ENCODE measurements at regions of chr12 and their contacts with region 1.

Region 1: DNA sequence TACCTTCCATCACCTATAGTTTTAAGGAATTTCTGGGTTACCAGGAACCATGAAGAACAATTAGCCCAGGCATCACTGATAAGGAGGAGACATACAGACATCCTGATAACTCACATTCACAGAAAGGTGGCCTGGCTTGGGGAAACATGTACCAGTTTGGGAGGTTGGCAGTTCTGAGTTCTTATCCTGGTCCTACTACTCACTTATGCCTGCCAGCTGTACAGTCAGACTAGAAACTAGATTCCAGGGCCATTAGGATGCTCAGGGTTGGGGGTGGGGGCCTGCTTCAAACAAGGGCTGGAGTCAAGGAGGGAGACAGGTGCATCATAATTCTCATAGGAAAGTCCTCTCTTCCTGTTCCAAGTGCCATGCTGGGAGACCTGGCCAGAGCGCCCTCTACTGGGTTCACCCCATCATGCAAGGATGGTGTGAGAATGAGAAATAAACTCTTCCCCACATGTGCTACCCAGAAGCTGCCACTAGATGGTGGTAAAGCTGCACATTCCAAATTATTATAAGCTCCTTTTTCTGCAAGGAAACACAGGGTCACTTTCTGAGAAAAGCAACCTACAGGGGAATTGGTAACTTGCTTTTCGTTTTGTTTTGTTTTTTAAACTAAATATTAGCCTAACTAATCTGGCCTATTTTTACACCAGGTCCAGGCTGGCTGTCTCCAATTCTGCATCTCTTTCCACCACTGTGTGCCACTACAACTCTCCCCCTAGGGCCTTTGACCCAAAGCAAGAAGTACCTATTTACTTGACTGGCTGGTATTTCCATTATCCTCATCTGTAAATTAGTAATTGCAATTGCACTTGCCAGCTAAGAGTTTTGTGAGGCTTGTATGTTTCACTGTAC is 14.5 kb downstream of the OAS2 start:
- DNase-seq: peak; percentile 75
- ATAC-seq: peak; percentile 81
- H3K4me3 Mint-ChIP-seq: no peak overlapping the region
- H3K27ac Mint-ChIP-seq: peak overlapping the region; percentile 1
- H3K4me1 Mint-ChIP-seq: peaks cover 17% of the 10 kb centered on the region
- H3K27me3 Mint-ChIP-seq: no peaks in the 10 kb centered on the region
- CTCF ChIP-seq: peak; percentile 95

Region 2: GRCh38 chr12:112900299-112901145 is 92.2 kb before region 1 on chr12:
- CTCF ChIA-PET with region 1: interaction called, 12 read pairs
- POLR2A ChIA-PET with region 1: no interaction called
- intact Hi-C with region 1: no loop called
- DNase-seq: peak; percentile 60
- ATAC-seq: peak; percentile 67
- H3K4me3 Mint-ChIP-seq: no peak overlapping the region
- H3K27ac Mint-ChIP-seq: no peak overlapping the region
- H3K4me1 Mint-ChIP-seq: peaks cover 15% of the 10 kb centered on the region
- H3K27me3 Mint-ChIP-seq: no peaks in the 10 kb centered on the region
- CTCF ChIP-seq: peak; percentile 86

Region 3: DNA sequence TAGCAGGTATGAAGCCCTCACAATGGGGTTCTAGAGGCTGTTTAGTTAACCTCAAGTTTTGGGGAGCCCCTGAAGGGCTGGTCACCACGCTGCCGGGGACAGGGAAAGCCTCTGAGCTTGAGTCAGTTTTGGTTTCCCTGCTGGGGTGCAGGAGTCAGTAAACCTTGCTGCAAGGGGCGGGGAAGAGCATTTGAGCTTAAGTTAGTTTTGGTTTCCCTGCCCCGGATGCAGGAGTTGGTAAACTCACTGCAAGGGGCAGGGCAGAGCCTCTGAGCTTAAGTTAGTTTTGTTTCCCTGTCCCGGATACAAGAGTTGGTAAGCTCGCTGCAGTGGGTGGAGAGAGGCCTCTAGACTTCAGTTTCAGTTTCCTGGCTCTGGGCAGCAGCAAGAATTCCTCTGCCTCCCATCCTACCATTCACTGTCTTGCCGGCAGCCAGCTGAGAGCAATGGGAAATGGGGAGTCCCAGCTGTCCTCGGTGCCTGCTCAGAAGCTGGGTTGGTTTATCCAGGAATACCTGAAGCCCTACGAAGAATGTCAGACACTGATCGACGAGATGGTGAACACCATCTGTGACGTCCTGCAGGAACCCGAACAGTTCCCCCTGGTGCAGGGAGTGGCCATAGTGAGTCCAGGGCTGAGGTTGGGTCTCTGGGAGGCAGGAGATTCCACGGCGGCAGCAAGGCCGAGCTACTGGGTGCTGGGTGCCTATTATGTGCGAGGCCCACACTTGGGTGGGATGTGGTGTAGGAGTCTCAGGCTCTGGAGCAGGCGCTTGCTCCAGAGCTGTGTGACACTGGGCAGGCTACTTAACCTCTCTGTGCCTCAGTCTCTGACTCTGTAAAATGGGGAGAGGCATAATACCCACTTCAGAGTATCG is 14.4 kb before region 1 on chr12 and contains the start of gene OAS2:
- CTCF ChIA-PET with region 1: interaction called, 54 read pairs
- POLR2A ChIA-PET with region 1: interaction called, 74 read pairs
- intact Hi-C with region 1: no loop called
- DNase-seq: peak; percentile 91
- ATAC-seq: peak; percentile 91
- H3K4me3 Mint-ChIP-seq: peak within 1 kb of the TSS; percentile 99
- H3K27ac Mint-ChIP-seq: peak within 1 kb of the TSS; percentile 99
- H3K4me1 Mint-ChIP-seq: peaks cover 35% of the 10 kb centered on the region
- H3K27me3 Mint-ChIP-seq: no peaks in the 10 kb centered on the region
- CTCF ChIP-seq: no peak
- total RNA-seq, gene OAS2: 95.7 to 104 TPM

Region 4: GRCh38 chr12:113030875-113031525 is 38.2 kb after region 1 on chr12:
- CTCF ChIA-PET with region 1: interaction called, 13 read pairs
- POLR2A ChIA-PET with region 1: interaction called, 6 read pairs
- intact Hi-C with region 1: no loop called
- DNase-seq: peak; percentile 4
- ATAC-seq: peak; percentile 39
- H3K4me3 Mint-ChIP-seq: no peak overlapping the region
- H3K27ac Mint-ChIP-seq: no peak overlapping the region
- H3K4me1 Mint-ChIP-seq: peaks cover 2% of the 10 kb centered on the region
- H3K27me3 Mint-ChIP-seq: peaks cover 4% of the 10 kb centered on the region
- CTCF ChIP-seq: peak; percentile 62

Region 5: GRCh38 chr12:113152835-113153814 is 160.4 kb after region 1 on chr12:
- CTCF ChIA-PET with region 1: interaction called, 15 read pairs
- POLR2A ChIA-PET with region 1: no interaction called
- intact Hi-C with region 1: no loop called
- DNase-seq: peak; percentile 83
- ATAC-seq: peak; percentile 83
- H3K4me3 Mint-ChIP-seq: peak overlapping the region; percentile 72
- H3K27ac Mint-ChIP-seq: peak overlapping the region; percentile 73
- H3K4me1 Mint-ChIP-seq: peaks cover 28% of the 10 kb centered on the region
- H3K27me3 Mint-ChIP-seq: peaks cover 21% of the 10 kb centered on the region
- CTCF ChIP-seq: peak; percentile 51

Region 6: DNA sequence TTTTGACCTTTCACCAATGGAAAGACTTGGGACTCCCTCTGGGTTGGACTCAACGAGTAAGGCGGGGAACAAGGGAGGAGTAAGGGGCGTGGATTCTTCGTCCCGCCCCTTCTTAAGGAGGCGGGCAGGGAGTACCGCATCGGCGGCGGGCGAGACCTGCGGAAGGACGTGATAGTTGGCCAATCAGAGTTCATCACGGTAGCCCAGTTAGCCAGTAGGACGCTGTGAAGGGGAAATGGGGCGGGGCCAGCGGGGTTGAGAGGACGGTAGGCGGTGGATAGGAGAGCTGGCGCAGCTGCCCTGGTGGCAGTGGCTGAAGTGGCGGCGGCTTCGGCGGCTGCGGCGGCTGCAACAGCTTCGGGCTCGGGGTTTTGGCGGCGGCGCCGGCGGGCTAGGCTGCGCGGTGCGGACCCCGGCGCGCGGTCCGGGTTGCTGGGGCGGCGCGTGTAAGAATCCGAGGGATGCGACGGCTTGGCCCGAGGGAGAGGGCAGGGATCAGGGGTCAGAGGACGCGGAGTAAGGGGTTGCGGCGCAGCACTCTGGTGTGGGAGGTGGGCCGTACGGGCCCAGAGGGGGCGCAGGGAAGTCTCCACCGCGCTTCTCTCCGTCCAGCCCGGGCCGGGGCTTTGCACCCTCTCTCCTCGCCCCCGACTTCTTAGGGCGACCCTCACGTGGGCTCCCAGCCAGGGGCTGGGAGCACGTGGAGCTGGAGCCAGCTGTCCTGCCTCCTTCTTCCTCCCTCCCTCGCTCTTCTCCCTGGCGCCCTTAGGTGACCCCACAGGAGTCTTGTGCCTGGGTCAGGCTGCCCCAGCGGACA is 228.6 kb after region 1 on chr12 and contains the start of gene TPCN1:
- CTCF ChIA-PET with region 1: no interaction called
- POLR2A ChIA-PET with region 1: no interaction called
- intact Hi-C with region 1: no loop called
- DNase-seq: peak; percentile 100
- ATAC-seq: peak; percentile 96
- H3K4me3 Mint-ChIP-seq: peak within 1 kb of the TSS; percentile 95
- H3K27ac Mint-ChIP-seq: peak within 1 kb of the TSS; percentile 88
- H3K4me1 Mint-ChIP-seq: peaks cover 35% of the 10 kb centered on the region
- H3K27me3 Mint-ChIP-seq: no peaks in the 10 kb centered on the region
- CTCF ChIP-seq: no peak
- total RNA-seq, gene TPCN1: 29.9 to 33.5 TPM

Measured in activated CD8-positive, alpha-beta T cell treated with anti-CD3 and anti-CD28 coated beads for 36 hours (primary cell).